MCF 10A (cell line): ENCODE measurements at regions of chr7 and their contacts with region 1.

Region 1: DNA sequence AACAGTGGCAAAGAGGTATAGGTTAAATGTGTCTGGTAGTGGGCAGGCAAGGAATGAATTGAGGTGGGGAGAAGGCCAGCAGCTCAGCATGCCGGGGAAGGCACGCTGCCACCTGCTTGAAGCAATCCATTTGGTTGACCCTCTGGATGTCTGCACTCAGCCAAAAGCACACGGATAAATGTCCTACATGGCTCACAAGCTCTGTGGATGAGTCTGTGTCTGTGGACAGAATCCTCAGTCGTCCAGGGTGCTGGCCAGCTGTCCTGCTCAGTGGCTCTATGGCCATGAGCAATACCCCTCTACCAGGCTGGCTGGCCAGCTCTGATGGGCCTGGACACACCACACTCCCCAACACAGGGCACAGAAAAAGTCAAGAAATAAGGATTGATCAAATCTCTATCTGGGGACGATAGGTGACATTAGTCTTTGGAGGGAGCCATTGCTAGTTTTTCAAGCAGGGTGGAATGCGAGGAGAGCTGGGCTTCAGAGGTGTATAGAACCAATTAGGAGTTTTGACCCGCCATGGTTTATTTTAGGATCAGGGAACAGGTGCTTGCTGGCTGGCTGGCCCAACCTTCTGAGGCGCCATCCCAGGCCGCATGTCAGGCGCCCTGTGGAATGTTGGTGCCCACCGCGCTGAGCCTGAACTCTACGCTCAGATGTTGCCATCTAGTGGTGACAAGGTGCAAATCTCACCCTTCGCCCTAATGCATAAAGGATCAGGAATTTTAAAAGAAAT is 493.4 kb downstream of the TNS3 start:
- DNase-seq: peak; percentile 64
- H3K4me3 Mint-ChIP-seq: no peak overlapping the region
- H3K27ac Mint-ChIP-seq: peak overlapping the region; percentile 52
- H3K4me1 Mint-ChIP-seq: peaks cover 13% of the 10 kb centered on the region
- H3K27me3 Mint-ChIP-seq: no peaks in the 10 kb centered on the region
- CTCF ChIP-seq: peak; percentile 87

Region 2: GRCh38 chr7:46131916-46132795 is 956.3 kb before region 1 on chr7:
- CTCF ChIA-PET with region 1: interaction called, 3 read pairs
- POLR2A ChIA-PET with region 1: no interaction called
- intact Hi-C with region 1: loop called (anchors 2 kb)
- DNase-seq: peak; percentile 6
- H3K4me3 Mint-ChIP-seq: no peak overlapping the region
- H3K27ac Mint-ChIP-seq: no peak overlapping the region
- H3K4me1 Mint-ChIP-seq: peaks cover 12% of the 10 kb centered on the region
- H3K27me3 Mint-ChIP-seq: no peaks in the 10 kb centered on the region
- CTCF ChIP-seq: no peak

Region 3: DNA sequence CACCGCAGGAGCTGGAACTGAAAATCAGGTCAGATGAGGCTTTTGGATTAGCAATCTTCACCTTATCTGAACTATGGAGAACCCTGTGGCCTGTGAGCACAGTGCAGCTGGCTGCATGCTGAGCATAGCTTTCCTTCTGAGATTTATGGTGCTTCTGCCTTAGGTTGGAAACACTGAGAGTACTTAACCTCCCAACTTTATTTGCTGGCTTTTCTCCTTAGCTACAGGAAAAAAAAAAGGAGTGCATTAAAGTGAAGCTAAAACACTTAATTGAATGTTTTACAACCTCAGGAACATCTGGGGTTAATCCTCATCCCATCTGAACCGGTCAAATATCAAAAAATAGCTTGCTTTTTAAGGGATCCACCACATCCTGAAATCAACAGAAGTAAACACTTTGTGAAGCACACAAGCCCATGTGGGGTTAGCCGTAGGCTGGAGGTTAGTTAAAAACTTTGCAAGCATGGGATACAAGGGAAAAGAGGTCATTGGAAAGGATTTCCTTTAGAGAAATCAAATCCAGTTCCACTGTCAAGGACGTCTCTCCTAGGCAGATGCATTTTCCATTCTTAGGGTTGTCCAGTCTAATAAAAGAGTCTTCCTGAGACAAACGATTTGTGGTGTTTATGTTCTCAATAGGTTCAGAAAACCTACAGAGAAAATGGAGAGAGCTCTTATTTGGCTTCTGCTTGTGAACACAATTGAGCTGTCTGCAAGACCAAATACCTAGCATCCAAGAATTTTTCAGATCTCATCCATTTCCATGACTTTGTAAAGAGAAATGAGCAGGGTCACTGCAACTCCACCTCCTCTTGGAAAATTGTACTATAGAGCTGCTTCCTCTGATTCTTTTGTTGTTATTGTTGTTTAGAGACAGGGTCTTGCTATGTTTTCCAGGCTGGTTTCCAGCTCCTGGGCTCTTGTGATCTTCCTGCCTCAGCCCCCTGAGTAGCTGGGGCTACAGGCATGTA is 697.0 kb before region 1 on chr7:
- CTCF ChIA-PET with region 1: no interaction called
- POLR2A ChIA-PET with region 1: no interaction called
- intact Hi-C with region 1: no loop called
- DNase-seq: no peak
- H3K4me3 Mint-ChIP-seq: no peak overlapping the region
- H3K27ac Mint-ChIP-seq: no peak overlapping the region
- H3K4me1 Mint-ChIP-seq: peaks cover 8% of the 10 kb centered on the region
- H3K27me3 Mint-ChIP-seq: no peaks in the 10 kb centered on the region
- CTCF ChIP-seq: no peak

Region 4: GRCh38 chr7:46752881-46753366 is 335.6 kb before region 1 on chr7:
- CTCF ChIA-PET with region 1: no interaction called
- POLR2A ChIA-PET with region 1: no interaction called
- intact Hi-C with region 1: loop called (anchors 5 kb)
- DNase-seq: peak; percentile 88
- H3K4me3 Mint-ChIP-seq: no peak overlapping the region
- H3K27ac Mint-ChIP-seq: peak overlapping the region; percentile 47
- H3K4me1 Mint-ChIP-seq: peaks cover 42% of the 10 kb centered on the region
- H3K27me3 Mint-ChIP-seq: no peaks in the 10 kb centered on the region
- CTCF ChIP-seq: no peak

Region 5: GRCh38 chr7:46776790-46777189 is 311.7 kb before region 1 on chr7:
- CTCF ChIA-PET with region 1: interaction called, 13 read pairs
- POLR2A ChIA-PET with region 1: no interaction called
- intact Hi-C with region 1: loop called (anchors 1 kb)
- DNase-seq: peak; percentile 47
- H3K4me3 Mint-ChIP-seq: no peak overlapping the region
- H3K27ac Mint-ChIP-seq: no peak overlapping the region
- H3K4me1 Mint-ChIP-seq: peaks cover 25% of the 10 kb centered on the region
- H3K27me3 Mint-ChIP-seq: no peaks in the 10 kb centered on the region
- CTCF ChIP-seq: peak; percentile 12

Region 6: GRCh38 chr7:47078241-47078640 is 10.3 kb before region 1 on chr7:
- CTCF ChIA-PET with region 1: interaction called, 15 read pairs
- POLR2A ChIA-PET with region 1: interaction called, 3 read pairs
- intact Hi-C with region 1: no loop called
- DNase-seq: no peak
- H3K4me3 Mint-ChIP-seq: no peak overlapping the region
- H3K27ac Mint-ChIP-seq: no peak overlapping the region
- H3K4me1 Mint-ChIP-seq: no peaks in the 10 kb centered on the region
- H3K27me3 Mint-ChIP-seq: no peaks in the 10 kb centered on the region
- CTCF ChIP-seq: no peak